ENCODE measurements at regions of chr3 and their contacts with region 1.

Region 1: GRCh38 chr3:57169872-57170623 is 4.9 kb upstream of the IL17RD start:
- DNase-seq: peak; percentile 84
- ATAC-seq: peak; percentile 75 to 84

Region 2: GRCh38 chr3:57120040-57120439 is 50.0 kb before region 1 on chr3:
- intact Hi-C with region 1: no loop called
- DNase-seq: no peak
- ATAC-seq: peak; percentile 19 to 31

Region 3: DNA sequence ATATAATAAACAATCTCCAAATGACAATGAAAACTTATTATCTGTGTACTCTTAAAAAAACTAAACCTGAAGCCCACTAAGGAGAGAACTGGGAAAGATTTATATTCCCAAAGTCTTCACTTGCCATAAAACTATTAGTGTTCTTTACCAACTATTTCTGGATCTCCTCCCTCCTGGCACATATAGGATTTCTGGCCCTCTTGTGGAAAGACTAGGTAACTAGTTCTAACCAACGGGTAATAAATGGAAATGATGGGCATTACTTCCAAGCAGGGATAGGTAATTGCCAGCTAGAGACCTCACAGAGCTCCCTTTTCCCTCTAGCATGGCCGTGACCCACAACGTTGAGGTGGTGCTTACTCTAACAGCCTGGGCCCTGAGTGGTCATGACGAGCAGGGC is 264.0 kb after region 1 on chr3:
- intact Hi-C with region 1: loop called in 1 of 2 experiments (anchors 10 kb)
- DNase-seq: no peak
- ATAC-seq: no peak